GM10248 (cell line): ENCODE measurements at regions of chr10 and their contacts with region 1.

Region 1: DNA sequence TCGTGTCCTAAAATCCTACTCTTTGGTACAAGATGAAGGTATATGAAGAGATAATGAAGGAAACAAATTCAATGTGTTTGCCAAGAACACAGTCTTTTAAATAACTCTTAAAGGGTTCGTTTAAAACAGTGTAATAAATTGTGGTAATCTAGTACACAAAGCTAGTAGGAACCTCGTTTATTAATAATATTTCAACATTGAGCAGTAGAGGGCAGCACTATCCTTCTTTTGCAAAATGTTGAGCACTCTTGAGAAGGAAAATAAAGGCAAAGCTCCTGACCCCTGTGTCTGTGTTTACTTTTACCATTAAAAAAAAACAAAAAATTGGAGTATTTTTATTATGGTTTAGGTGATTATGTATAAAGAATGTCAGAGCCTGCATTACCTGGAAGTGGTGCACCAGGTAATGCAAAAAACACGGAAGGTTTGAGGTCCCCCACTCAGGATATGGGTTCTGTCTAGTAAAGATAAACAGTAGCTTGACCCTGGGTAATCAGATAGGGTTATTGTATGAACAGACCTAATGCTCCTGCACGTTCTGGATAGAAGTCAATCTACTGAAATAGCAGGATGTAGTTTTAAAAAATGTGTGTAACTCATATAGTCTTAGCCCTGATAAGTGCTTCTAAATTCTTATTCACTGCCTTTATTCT is 5.7 kb upstream of the GOT1 start:
- DNase-seq: no peak
- CTCF ChIP-seq: peak; percentile 62

Region 2: DNA sequence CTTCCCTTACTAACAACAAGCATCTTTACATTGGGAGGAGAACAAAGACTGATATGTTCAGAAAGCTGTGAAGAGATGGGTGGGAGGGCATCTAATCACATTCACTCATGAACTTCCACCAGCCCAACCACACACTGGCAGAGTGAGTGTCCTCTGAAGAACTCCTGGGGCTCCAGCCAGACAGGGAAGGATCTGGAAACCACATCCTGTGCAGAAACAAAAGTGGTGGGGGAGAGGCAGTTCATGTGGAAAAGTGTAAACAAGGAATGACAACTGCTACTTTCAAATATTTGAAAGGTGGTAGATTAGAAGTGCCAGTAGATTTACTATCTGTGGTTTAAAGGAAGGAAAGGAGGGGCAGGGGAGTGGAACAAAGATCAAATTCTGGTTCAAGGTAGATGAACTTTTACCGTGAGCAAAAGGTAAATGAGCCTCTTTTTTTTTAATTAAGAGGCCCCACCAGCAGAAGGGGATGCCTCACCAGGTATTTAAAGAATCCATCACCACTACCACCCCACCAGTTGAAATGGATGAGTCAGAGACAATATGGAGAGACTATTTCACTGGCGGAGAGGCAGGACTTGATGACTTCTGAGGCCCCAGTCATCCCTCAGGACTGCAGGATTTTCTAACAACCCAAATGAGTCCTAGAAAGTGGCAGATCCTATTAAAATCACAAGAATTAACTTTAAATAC is 40.2 kb before region 1 on chr10:
- CTCF ChIA-PET with region 1: interaction called, 17 read pairs
- POLR2A ChIA-PET with region 1: no interaction called
- DNase-seq: no peak
- CTCF ChIP-seq: no peak

Region 3: GRCh38 chr10:99425204-99425603 is 10.9 kb before region 1 on chr10:
- CTCF ChIA-PET with region 1: interaction called, 14 read pairs
- POLR2A ChIA-PET with region 1: no interaction called
- DNase-seq: no peak
- CTCF ChIP-seq: no peak

Region 4: DNA sequence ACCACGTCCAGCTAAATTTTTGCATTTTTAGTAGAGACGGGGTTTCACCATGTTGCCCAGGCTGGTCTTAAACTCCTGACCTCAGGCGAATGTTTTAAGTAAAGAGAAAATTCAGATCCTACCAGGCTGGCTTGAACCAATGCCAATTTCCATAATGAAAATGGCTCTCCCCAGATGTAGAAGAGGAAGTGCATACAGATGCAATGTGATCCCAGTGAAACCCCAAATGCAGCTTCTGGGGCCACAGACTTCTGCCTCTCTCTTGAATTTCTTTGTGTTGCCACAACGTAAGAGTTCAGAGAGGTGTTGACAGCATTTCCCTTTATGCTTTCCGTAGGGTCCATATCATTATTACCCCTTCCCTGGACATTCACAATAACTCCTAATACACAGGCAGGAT is 24.0 kb after region 1 on chr10:
- CTCF ChIA-PET with region 1: interaction called, 47 read pairs
- POLR2A ChIA-PET with region 1: no interaction called
- DNase-seq: no peak
- CTCF ChIP-seq: no peak

Region 5: DNA sequence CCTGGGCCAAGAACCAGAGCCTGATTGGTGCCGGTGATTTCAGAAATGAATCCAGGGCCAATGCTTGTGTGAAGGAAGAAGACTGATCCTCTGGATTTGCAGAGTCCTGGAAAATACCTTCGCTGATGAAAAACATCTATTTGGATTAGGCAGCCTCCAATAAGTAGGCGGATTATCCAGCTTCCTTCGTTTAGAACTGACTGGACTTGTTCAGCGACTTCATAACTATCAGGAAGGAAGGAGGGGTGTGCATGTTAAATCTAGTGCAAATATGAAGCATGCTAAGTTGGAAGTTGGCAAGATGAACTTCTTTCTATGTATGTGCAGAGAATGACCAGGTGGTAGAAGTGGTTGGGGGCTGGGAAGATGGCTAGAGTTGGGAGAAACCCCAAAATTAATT is 137.7 kb after region 1 on chr10:
- CTCF ChIA-PET with region 1: no interaction called
- POLR2A ChIA-PET with region 1: no interaction called
- DNase-seq: no peak
- CTCF ChIP-seq: no peak

Region 6: DNA sequence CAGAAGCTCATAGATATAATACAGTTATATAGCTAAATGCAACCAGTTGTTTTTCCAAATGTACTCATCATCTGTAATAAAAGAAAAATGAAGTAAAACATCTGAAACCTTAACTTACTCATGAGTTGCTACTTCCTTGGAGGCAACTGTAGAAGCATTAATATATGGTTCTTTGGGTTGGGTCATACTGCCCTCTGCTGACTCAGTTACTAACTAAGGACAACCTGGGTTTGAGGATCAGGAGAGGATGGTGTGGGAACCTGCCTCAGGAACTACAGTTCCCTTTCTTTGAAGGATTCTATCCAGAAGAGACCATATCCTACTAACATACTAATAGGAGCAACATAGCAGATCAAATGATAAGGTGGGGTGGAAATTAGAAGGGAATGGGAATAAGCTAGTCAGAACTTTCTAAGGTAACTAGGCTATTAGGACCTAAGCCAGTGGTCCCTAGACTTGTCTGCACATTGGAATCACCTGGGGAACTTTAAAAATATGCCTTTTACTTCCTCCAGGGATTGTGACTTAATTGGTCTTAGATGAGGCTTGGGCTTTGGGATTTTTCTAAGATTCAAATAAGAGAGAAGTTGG is 275.1 kb after region 1 on chr10:
- CTCF ChIA-PET with region 1: interaction called, 24 read pairs
- POLR2A ChIA-PET with region 1: no interaction called
- DNase-seq: peak; percentile 39
- CTCF ChIP-seq: peak; percentile 54